BJ (cell line): ENCODE measurements at regions of chr17 and their contacts with region 1.

Region 1: GRCh38 chr17:51298508-51299371 is 38.4 kb downstream of the UTP18 start:
- DNase-seq: no peak
- H3K4me3 ChIP-seq: no peak overlapping the region
- H3K27me3 ChIP-seq: no peaks in the 10 kb centered on the region
- CTCF ChIP-seq: peak; percentile 82

Region 2: DNA sequence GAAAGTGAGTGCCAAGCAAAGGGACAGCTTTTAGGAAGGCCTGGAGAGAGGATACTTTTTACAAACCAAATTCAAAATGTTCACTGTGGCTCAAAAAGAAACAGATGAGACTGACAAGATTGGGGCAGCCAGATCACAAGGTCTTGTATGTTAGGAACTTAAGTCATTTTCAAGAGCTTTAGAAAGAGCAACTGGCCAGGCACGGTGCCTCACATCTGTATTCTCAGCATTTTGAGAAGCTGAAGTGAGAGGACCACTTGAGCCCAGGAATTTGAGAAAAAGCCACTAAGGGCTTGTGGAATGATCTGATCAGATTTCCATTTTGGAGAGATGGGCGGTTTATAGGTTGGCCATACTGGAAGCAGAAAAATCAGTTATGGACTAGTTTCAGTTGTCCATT is 195.3 kb before region 1 on chr17:
- CTCF ChIA-PET with region 1: no interaction called
- POLR2A ChIA-PET with region 1: no interaction called
- DNase-seq: no peak
- H3K4me3 ChIP-seq: no peak overlapping the region
- H3K27me3 ChIP-seq: no peaks in the 10 kb centered on the region
- CTCF ChIP-seq: no peak

Region 3: DNA sequence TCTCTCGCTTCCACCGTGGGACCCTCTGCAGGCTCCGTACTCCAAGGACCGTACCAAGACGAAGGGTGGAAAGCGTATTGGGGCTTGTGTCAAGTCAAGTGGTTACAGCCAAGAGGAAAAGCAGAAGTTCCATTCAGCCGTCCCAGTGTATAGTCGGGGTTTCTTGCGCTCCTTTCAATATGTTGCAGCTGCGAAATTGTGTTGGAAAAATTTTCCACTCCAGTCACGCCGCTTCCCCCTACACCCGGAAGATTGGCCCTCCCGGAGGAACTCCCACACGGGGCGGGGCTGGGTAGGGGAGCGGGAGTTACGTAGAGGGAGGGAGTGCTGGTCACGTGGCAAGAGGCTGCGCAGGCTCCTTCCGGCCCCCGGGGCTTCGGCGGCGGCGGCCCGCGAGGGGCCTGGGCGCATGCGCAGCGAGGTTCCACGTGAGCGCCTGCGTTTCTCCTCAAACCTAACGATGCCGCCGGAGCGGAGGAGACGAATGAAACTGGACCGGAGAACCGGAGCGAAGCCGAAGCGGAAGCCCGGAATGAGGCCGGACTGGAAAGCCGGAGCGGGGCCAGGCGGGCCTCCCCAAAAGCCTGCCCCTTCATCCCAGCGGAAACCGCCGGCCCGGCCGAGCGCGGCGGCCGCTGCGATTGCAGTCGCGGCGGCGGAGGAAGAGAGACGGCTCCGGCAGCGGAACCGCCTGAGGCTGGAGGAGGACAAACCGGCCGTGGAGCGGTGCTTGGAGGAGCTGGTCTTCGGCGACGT is 38.4 kb before region 1 on chr17 and contains the start of gene UTP18:
- CTCF ChIA-PET with region 1: no interaction called
- POLR2A ChIA-PET with region 1: no interaction called
- DNase-seq: peak; percentile 77
- H3K4me3 ChIP-seq: peak within 1 kb of the TSS; percentile 92
- H3K27me3 ChIP-seq: no peaks in the 10 kb centered on the region
- CTCF ChIP-seq: no peak
- polyA plus RNA-seq, gene UTP18: 6.8 and 14.1 TPM in 2 replicates

Region 4: DNA sequence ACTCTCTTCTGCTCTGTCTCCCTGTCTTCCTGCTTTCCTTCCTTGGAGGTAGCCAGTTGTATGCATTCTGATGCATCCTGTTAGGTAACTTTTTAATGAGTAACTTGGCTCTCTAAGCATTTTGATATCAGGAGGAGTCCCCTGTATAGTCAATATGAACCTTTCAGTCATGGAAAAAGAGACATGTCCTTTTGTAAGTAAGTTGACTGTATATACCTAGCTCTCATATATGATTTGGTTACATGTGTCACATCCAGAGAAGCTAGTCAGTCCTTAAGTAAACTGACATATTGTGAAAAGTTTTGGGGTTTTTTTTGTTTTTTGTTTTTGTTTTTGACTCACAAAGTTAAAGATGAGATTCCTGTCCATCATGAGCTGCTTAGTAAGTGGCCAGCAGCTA is 19.6 kb before region 1 on chr17:
- CTCF ChIA-PET with region 1: interaction called, 10 read pairs
- POLR2A ChIA-PET with region 1: no interaction called
- DNase-seq: no peak
- H3K4me3 ChIP-seq: no peak overlapping the region
- H3K27me3 ChIP-seq: no peaks in the 10 kb centered on the region
- CTCF ChIP-seq: no peak

Region 5: GRCh38 chr17:51536627-51537026 is 237.9 kb after region 1 on chr17:
- CTCF ChIA-PET with region 1: interaction called, 25 read pairs
- POLR2A ChIA-PET with region 1: no interaction called
- DNase-seq: no peak
- H3K4me3 ChIP-seq: no peak overlapping the region
- H3K27me3 ChIP-seq: no peaks in the 10 kb centered on the region
- CTCF ChIP-seq: no peak

Region 6: GRCh38 chr17:51770031-51770759 is 471.5 kb after region 1 on chr17:
- CTCF ChIA-PET with region 1: no interaction called
- POLR2A ChIA-PET with region 1: no interaction called
- DNase-seq: no peak
- H3K4me3 ChIP-seq: no peak overlapping the region
- H3K27me3 ChIP-seq: no peaks in the 10 kb centered on the region
- CTCF ChIP-seq: no peak